ENCODE measurements at regions of chr6 and their contacts with region 1.

Region 1: DNA sequence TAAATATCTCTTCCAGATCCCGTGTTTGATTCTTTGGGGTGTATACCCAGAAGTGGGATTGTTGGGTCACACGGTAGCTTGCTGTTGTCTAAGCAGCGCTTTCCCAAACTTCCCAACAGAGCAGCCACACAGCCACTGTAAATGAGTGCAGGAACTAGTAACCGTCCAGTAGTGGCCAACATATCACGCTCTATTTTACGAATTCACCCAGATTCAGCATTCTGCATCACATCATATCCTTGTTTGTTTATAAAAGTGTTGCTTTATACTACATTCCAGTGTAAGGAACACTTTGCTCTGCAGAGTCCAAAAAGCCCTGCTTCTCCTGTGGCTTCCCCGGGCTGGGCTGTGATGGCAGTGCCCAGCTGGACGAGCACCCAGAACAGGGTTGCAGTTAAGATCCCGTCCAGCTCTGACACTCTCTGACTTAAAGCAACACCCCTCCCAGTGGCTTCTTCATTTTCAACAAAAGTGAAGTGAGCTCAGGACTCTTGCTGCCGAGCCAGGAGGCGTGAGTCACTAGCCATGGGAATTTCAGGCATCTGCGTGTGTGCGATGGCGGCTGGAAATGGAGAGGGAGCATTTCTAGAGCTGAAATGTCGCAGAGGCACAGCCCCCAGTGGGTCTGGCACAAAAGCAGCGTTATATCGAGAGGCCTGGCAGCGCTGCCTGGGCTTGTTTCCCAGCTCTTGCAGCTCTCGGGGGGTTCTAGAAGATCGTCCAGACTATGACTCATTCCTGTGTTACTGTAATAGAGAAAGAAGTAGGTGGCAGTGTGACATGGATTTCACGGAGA is 216.3 kb upstream of the ECI2 start:
- DNase-seq: peak; percentile 71 to 86
- ATAC-seq: peak; percentile 92 to 95
- H3K4me3 ChIP-seq: peak overlapping the region; percentile 42 to 56 (median 45)
- H3K27ac ChIP-seq: peak overlapping the region; percentile 78 to 89 (median 82)
- H3K4me1 ChIP-seq: peaks cover 16 to 21% of the 10 kb centered on the region in 2 donors
- H3K27me3 ChIP-seq: no peaks in the 10 kb centered on the region
- CTCF ChIP-seq: peak in 1 of 5 experiments; percentile 20
- POLR2A ChIP-seq: peak in 1 of 2 donors; percentile 31

Region 2: DNA sequence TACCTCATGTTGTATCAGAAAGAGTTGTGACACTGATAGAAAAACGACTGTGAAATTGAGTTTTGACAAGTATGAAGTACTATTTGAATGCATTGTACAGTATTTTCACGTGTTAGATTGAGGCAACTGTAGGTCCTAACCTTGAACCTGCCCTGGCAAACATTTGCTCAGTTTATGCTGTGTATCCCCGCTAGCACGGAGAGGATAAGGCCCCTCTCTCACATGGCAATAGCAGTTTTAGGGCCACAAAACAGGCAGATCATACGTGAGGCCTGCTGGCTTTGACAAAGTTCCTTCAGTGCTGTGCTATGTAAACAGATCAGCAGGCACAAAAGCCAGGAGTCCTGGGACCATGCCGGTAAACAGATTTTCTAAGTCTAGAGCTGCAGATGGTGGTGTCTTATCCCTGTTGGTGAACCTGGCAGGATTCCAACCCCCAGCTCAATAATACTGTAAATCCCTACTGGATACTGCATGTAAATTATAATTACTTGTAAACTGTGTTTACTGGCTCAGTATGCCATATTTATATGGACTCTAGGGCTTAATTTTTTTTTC is 249.0 kb before region 1 on chr6:
- in situ Hi-C with region 1: no loop called
- intact Hi-C with region 1: no loop called
- DNase-seq: no peak
- ATAC-seq: peak in 1 of 2 donors; percentile 75
- H3K4me3 ChIP-seq: no peak overlapping the region
- H3K27ac ChIP-seq: peak overlapping the region; percentile 55 to 77 (median 66)
- H3K4me1 ChIP-seq: peaks cover 29 to 43% of the 10 kb centered on the region in 2 donors
- H3K27me3 ChIP-seq: no peaks in the 10 kb centered on the region
- CTCF ChIP-seq: no peak
- POLR2A ChIP-seq: no peak

Region 3: GRCh38 chr6:4460586-4461475 is 109.1 kb after region 1 on chr6:
- in situ Hi-C with region 1: no loop called
- intact Hi-C with region 1: loop called (anchors 2 kb)
- DNase-seq: peak; percentile 67 to 77
- ATAC-seq: peak; percentile 84 to 90
- H3K4me3 ChIP-seq: peak overlapping the region in 2 of 4 donors; percentile 7 to 19
- H3K27ac ChIP-seq: peak overlapping the region; percentile 38 to 72 (median 68)
- H3K4me1 ChIP-seq: peaks cover 18 to 22% of the 10 kb centered on the region in 2 donors
- H3K27me3 ChIP-seq: no peaks in the 10 kb centered on the region
- CTCF ChIP-seq: no peak
- POLR2A ChIP-seq: peak in 1 of 2 donors; percentile 32

Region 4: GRCh38 chr6:4533576-4533975 is 181.9 kb after region 1 on chr6:
- in situ Hi-C with region 1: no loop called
- intact Hi-C with region 1: no loop called
- DNase-seq: no peak
- ATAC-seq: no peak
- H3K4me3 ChIP-seq: no peak overlapping the region
- H3K27ac ChIP-seq: no peak overlapping the region
- H3K4me1 ChIP-seq: no peaks in the 10 kb centered on the region
- H3K27me3 ChIP-seq: no peaks in the 10 kb centered on the region
- CTCF ChIP-seq: no peak
- POLR2A ChIP-seq: no peak

Region 5: DNA sequence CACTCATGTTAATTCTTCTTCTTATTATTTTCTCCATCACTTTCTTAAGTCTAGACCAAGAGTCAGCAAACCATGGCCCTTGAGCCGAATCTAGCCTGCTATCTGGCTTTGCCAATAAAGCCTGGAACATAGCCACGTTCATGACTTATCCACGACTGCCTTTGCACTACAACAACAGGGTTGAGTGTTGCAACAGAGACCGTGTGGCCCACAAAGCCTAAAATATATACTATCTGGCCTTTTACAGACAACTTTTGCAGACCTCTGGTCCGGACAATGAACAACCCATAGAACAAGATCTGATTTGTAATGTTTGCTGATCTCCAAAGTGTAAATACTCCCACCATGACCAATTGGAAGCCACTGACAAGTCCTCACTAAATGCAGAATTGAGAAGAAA is 283.9 kb after region 1 on chr6:
- in situ Hi-C with region 1: no loop called
- intact Hi-C with region 1: no loop called
- DNase-seq: no peak
- ATAC-seq: no peak
- H3K4me3 ChIP-seq: no peak overlapping the region
- H3K27ac ChIP-seq: no peak overlapping the region
- H3K4me1 ChIP-seq: peaks cover 16 to 19% of the 10 kb centered on the region in 2 donors
- H3K27me3 ChIP-seq: no peaks in the 10 kb centered on the region
- CTCF ChIP-seq: no peak
- POLR2A ChIP-seq: no peak

Region 6: GRCh38 chr6:4664117-4664626 is 312.5 kb after region 1 on chr6:
- in situ Hi-C with region 1: no loop called
- intact Hi-C with region 1: loop called (anchors 1 kb)
- DNase-seq: peak; percentile 76 to 86
- ATAC-seq: peak; percentile 88 to 97
- H3K4me3 ChIP-seq: no peak overlapping the region
- H3K27ac ChIP-seq: peak overlapping the region; percentile 58 to 64 (median 60)
- H3K4me1 ChIP-seq: peaks cover 10 to 13% of the 10 kb centered on the region in 2 donors
- H3K27me3 ChIP-seq: no peaks in the 10 kb centered on the region
- CTCF ChIP-seq: no peak
- POLR2A ChIP-seq: no peak

Region 7: DNA sequence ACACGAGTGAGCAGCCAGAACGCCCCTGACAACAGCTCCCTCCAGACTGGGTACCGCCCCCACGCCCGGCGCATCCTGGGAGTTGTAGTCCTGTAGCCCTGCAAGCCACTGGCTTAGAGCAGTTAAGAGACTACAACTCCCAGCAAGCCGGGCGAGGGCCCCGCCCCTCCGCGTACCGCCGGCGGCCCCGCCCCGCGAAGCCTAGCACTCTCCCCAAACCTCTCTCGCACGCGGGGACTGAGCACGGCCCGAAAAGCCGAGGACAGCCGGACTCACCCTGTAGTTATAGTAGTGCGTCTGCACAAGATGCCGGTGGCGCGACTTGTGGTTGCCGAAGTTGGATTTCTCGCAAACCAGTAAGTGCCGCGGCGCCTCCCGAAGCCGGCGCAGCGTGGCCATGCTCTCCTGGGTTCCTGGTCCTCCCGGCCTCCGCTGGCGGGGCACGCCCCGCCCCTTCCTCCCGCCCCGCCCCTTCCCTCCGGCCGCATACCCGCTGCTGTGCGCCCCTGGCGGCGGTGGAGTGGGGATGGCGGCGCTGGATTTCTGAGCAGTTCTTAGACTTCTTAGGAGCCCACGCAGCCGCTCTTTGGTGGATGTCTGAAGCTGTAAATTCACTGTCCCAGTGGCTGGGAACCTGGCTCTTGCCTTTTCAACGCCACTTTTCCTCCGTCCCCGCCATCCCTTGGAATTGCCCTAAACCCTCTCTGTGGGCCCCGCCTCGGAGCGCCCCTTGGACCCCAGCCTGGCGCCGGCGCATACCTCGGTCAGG is 652.1 kb after region 1 on chr6 and contains the start of gene RPP40:
- in situ Hi-C with region 1: no loop called
- intact Hi-C with region 1: loop called (anchors 1 kb)
- DNase-seq: peak; percentile 93 to 95
- ATAC-seq: peak; percentile 99
- H3K4me3 ChIP-seq: peak within 1 kb of the TSS; percentile 67 to 83 (median 76)
- H3K27ac ChIP-seq: peak within 1 kb of the TSS; percentile 87 to 90 (median 88)
- H3K4me1 ChIP-seq: peaks cover 5 to 7% of the 10 kb centered on the region in 2 donors
- H3K27me3 ChIP-seq: no peaks in the 10 kb centered on the region
- CTCF ChIP-seq: peak; percentile 72 to 97 (median 82)
- POLR2A ChIP-seq: peak in 1 of 2 donors; percentile 38
- total RNA-seq, gene RPP40: 5.1 to 16.4 (median 12.2) TPM